ENCODE measurements at regions of chr5 and their contacts with region 1.

Region 1: DNA sequence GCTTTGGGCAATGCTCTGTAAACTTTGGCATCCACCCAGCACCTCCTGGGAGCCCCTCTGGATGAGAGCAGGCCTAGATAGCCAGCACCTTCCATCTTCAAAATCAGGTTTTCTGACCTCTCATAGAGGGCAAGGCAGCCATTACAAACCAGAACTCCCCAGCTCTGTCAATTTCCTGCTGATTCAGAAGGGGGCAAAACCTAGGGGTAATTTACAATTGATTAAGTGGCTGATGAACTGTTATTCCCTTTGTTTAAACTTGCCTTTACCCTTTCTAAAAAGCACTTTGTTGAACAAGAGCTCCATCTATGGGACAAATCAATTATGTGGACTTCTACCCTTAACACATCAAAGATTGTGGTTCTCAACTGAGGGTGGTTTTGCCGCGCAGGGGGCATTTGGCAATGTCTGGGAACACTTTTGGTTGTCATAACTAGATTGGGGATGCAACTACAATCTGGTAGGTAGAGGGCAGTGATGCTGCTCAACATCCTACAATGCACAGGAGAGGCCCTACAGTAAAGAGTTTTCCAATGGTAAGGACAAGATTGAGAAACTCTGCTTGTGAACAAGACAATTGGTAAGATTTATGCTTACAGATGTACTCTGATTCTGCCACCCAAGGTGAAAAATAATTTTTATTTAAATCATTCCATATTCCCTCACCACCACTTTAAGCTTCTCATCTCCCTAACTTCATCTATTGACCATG is 184.1 kb downstream of the MARCHF11 start:
- DNase-seq: no peak
- H3K4me3 ChIP-seq: no peak overlapping the region
- H3K27me3 ChIP-seq: peaks cover 2% of the 10 kb centered on the region; the same call in 1 of the 2 replicates
- CTCF ChIP-seq: peak; percentile 64

Region 2: DNA sequence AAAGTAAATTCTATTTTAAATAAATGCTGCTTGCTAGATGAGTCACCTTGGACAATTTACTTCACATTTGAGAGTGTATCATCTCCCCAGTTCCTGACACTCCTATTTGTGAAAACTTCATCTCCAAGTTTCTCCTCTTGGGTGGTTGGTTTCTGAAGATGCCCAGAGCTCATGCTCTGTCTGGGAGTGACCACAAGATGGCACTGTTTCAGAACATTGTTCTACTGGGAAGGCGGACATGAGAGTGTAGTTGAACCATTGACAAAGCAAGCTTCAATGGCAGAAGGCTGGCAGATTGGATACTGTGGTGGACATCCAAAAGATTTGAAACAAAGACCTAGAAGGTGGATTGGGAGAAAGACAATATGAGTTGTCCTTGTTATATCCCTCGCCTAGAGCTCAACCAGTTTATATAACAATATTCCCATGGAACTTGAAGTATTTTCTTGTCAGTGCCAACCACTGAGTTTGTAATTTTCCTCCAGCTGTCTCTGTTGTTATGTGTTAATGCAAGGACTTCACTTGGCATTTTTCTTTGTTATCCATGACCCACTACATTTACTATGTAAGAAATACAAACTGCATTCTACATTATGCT is 889.6 kb before region 1 on chr5:
- CTCF ChIA-PET with region 1: interaction called, 61 read pairs
- POLR2A ChIA-PET with region 1: no interaction called
- DNase-seq: no peak
- H3K4me3 ChIP-seq: no peak overlapping the region
- H3K27me3 ChIP-seq: peaks cover 2% of the 10 kb centered on the region; the same call in 1 of the 2 replicates
- CTCF ChIP-seq: peak; percentile 86

Region 3: GRCh38 chr5:15463231-15463980 is 532.1 kb before region 1 on chr5:
- CTCF ChIA-PET with region 1: interaction called, 45 read pairs
- POLR2A ChIA-PET with region 1: no interaction called
- DNase-seq: no peak
- H3K4me3 ChIP-seq: no peak overlapping the region
- H3K27me3 ChIP-seq: peaks cover 3% of the 10 kb centered on the region
- CTCF ChIP-seq: peak; percentile 65

Region 4: GRCh38 chr5:15499528-15500324 is 495.8 kb before region 1 on chr5 and contains the start of gene FBXL7:
- CTCF ChIA-PET with region 1: interaction called, 13 read pairs
- POLR2A ChIA-PET with region 1: no interaction called
- DNase-seq: no peak
- H3K4me3 ChIP-seq: peak within 1 kb of the TSS; percentile 77
- H3K27me3 ChIP-seq: no peaks in the 10 kb centered on the region
- CTCF ChIP-seq: peak; percentile 49
- polyA plus RNA-seq, gene FBXL7: 17.9 and 23.2 TPM in 2 replicates

Region 5: DNA sequence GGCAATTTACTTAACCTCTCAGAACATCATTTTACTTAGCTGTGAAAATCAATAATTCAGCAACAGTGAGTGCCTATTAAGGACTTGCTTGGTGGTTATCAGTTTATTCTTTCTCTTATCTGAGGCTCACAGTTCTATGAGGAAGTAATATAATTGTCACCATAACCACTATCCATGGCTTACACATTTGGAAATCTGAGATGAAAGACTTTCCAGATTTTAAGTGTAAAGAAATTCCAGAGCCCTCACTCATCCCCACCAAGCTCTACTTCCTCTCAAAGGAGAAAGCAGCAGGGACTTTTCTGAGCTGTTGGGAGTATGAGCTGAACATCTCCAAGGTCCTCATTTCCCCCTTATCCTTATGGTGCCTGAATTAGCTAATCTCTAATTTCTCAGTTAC is 174.0 kb before region 1 on chr5:
- CTCF ChIA-PET with region 1: interaction called, 14 read pairs
- POLR2A ChIA-PET with region 1: no interaction called
- DNase-seq: no peak
- H3K4me3 ChIP-seq: no peak overlapping the region
- H3K27me3 ChIP-seq: no peaks in the 10 kb centered on the region
- CTCF ChIP-seq: no peak

Region 6: GRCh38 chr5:15948190-15948589 is 47.3 kb before region 1 on chr5:
- CTCF ChIA-PET with region 1: no interaction called
- POLR2A ChIA-PET with region 1: no interaction called
- DNase-seq: no peak
- H3K4me3 ChIP-seq: no peak overlapping the region
- H3K27me3 ChIP-seq: no peaks in the 10 kb centered on the region
- CTCF ChIP-seq: no peak

Measured in BJ (cell line).